ENCODE measurements at regions of chr15 and their contacts with region 1.

Region 1: DNA sequence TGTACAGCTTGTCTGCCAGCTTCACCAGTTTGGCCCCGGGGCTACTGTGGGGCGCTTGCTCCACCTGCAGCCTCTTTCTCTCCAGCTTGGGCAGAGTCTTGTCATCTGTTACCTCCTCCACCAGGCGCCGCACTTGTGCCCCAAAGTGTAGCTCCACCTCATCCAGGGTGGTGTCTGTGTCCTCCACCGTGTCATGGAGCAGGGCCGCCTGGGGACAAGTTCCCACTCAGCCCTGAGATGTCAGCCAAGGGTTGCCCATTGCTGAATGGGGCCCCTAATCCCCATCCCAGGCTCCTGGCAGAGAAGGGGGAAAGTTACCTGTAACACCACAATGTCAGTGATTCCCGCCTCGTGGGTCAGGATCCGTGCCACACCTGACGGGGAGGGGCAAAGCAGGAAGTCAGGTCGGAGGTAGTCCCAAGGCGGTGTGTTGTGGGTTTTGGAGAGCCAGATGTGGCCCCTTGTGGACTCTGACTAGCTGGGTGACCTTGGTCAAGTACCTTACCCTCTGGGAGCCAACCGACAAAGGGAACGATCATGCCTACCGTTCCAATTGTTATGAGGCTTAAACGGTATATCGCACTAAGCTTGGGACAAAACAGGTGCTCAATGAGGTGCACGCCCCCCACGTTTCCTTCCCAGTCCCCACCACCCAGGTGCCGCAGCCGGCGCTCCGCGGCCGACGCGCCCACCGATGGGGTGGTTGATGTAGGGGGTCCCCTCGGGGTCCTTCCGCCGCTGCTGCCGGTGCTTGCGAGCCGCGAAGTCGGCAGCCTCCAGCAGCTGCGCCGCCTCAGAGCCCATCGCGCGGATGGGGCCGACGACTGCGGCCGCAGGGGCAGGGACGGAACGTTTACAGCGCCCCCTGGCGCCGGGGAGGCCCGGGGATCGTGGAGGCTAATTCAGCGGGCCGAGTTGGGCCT is at the start of gene HDDC3:
- DNase-seq: peak; percentile 91 to 93
- ATAC-seq: peak; percentile 46 to 70 (median 55)
- H3K4me3 ChIP-seq: peak within 1 kb of the TSS; percentile 77
- H3K4me3 Mint-ChIP-seq: peak within 1 kb of the TSS; percentile 94
- H3K27ac ChIP-seq: peak within 1 kb of the TSS; percentile 88
- H3K27ac Mint-ChIP-seq: peak within 1 kb of the TSS; percentile 97
- H3K4me1 ChIP-seq: peaks cover 55% of the 10 kb centered on the region
- H3K4me1 Mint-ChIP-seq: peaks cover 53 to 62% of the 10 kb centered on the region in 2 donors
- H3K27me3 ChIP-seq: no peaks in the 10 kb centered on the region
- H3K27me3 Mint-ChIP-seq: no peaks in the 10 kb centered on the region
- CTCF ChIP-seq: peak; percentile 98
- total RNA-seq, gene HDDC3: 11.2 to 14.5 (median 12.1) TPM

Region 2: DNA sequence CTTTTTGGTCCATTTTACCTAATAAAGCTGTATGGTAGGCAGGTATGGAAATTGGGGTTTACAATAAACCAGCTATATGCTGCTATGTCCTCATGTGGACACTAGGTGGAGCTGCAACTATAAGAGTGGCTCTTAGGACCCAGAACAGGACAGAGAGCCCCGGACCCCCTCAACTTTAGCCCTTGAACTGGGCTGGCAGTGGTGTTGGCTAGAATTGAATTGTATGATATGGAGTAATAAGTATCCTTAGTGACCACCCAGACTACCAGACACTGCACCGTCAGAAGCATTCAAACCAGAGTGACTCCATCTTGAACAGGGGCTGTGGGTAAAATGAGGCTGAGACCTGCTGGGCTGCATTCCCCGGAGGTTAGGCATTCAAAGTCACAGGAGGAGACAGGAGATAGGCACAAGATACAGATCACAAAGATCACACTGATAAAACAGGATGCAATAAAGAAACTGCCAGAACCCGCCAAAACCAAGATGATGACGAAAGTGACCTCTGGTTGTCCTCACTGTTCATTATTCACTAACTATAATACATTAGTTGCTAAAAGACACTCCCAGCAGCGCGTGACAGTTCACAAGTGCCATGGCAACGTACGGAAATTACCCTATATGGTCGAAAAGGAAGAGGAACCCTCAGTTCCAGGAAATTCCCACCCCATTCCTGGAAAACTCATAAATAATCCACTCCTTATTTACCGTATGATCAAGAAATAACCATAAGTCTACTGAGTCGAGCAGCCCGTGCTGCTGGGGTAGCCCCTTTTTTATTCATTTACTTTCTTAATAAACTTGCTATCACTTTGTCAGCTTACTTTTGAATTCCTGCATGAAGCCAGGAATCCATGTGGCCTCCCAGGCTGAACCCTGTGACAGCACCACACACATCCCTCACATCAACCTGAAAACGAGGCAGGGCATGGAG is 283.6 kb before region 1 on chr15:
- intact Hi-C with region 1: loop called (anchors 2 kb)
- DNase-seq: peak; percentile 42 to 85
- ATAC-seq: peak; percentile 84 to 88 (median 88)
- H3K4me3 ChIP-seq: no peak overlapping the region
- H3K4me3 Mint-ChIP-seq: peak overlapping the region; percentile 84
- H3K27ac ChIP-seq: peak overlapping the region; percentile 27
- H3K27ac Mint-ChIP-seq: peak overlapping the region; percentile 85 to 92
- H3K4me1 ChIP-seq: peaks cover 12% of the 10 kb centered on the region
- H3K4me1 Mint-ChIP-seq: peaks cover 9 to 24% of the 10 kb centered on the region in 2 donors
- H3K27me3 ChIP-seq: no peaks in the 10 kb centered on the region
- H3K27me3 Mint-ChIP-seq: peaks cover 0 to 7% of the 10 kb centered on the region in 2 donors
- CTCF ChIP-seq: peak; percentile 95

Region 3: DNA sequence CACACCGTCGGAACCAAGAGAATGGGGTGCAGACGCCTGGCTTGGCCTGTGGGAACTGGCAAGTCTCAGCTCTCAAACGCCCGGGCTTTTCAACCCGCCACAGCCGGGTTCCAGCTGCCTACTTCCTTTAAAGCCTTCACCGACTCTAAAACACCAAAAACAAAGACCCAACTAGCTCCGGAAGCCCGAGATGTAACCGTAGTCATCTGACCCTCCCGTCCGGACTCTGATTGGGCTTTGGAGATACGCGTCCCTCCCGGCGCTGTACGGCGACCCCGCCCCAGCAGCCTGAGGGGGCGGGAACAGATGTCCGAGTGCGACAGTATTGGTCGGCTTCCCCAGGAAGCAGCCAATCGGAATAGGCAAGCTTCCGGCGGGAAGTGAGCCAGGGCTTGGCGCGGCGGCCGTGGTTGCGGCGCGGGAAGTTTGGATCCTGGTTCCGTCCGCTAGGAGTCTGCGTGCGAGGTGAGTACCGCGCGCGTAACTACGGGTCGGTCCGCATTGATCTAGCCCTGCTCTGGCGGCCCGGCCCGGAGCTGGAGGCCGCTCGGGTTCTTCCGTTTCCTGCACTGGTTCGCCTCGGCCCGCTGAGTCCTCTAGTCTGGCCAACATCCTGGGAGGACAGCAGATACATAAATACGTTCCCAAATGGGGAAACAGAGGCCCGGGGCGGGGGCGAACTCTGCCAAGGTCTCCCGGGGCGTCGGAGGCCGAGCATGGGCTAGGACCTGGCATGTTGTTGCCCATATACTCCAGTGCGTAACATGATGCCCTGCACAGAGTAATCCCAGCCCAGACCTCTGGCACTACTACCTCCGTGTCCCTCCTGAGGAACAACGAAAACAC is 214.8 kb before region 1 on chr15 and contains the start of gene BLM:
- intact Hi-C with region 1: loop called (anchors 2 kb)
- DNase-seq: peak; percentile 91 to 98
- ATAC-seq: peak; percentile 98 to 100 (median 99)
- H3K4me3 ChIP-seq: peak within 1 kb of the TSS; percentile 92
- H3K4me3 Mint-ChIP-seq: peak within 1 kb of the TSS; percentile 98
- H3K27ac ChIP-seq: peak within 1 kb of the TSS; percentile 82
- H3K27ac Mint-ChIP-seq: peak within 1 kb of the TSS; percentile 95 to 97
- H3K4me1 ChIP-seq: peaks cover 5% of the 10 kb centered on the region
- H3K4me1 Mint-ChIP-seq: peaks cover 37 to 39% of the 10 kb centered on the region in 2 donors
- H3K27me3 ChIP-seq: no peaks in the 10 kb centered on the region
- H3K27me3 Mint-ChIP-seq: no peaks in the 10 kb centered on the region
- CTCF ChIP-seq: no peak
- total RNA-seq, gene BLM: 9.9 to 15.9 (median 14.1) TPM

Region 4: GRCh38 chr15:90851114-90851513 is 80.9 kb before region 1 on chr15:
- intact Hi-C with region 1: no loop called
- DNase-seq: peak in 1 of 2 donors; percentile 68
- ATAC-seq: peak; percentile 24 to 51 (median 42)
- H3K4me3 ChIP-seq: no peak overlapping the region
- H3K4me3 Mint-ChIP-seq: peak overlapping the region; percentile 76
- H3K27ac ChIP-seq: no peak overlapping the region
- H3K27ac Mint-ChIP-seq: peak overlapping the region; percentile 80 to 85
- H3K4me1 ChIP-seq: peaks cover 57% of the 10 kb centered on the region
- H3K4me1 Mint-ChIP-seq: peaks cover 35 to 46% of the 10 kb centered on the region in 2 donors
- H3K27me3 ChIP-seq: no peaks in the 10 kb centered on the region
- H3K27me3 Mint-ChIP-seq: peaks cover 0 to 2% of the 10 kb centered on the region in 2 donors
- CTCF ChIP-seq: no peak

Region 5: GRCh38 chr15:90902040-90902839 is 29.8 kb before region 1 on chr15:
- intact Hi-C with region 1: loop called (anchors 1 kb)
- DNase-seq: peak; percentile 62 to 87
- ATAC-seq: peak; percentile 72 to 85 (median 81)
- H3K4me3 ChIP-seq: peak overlapping the region; percentile 75
- H3K4me3 Mint-ChIP-seq: peak overlapping the region; percentile 93
- H3K27ac ChIP-seq: peak overlapping the region; percentile 74
- H3K27ac Mint-ChIP-seq: peak overlapping the region; percentile 87 to 88
- H3K4me1 ChIP-seq: peaks cover 17% of the 10 kb centered on the region
- H3K4me1 Mint-ChIP-seq: peaks cover 22 to 28% of the 10 kb centered on the region in 2 donors
- H3K27me3 ChIP-seq: no peaks in the 10 kb centered on the region
- H3K27me3 Mint-ChIP-seq: no peaks in the 10 kb centered on the region
- CTCF ChIP-seq: peak; percentile 71

Region 6: DNA sequence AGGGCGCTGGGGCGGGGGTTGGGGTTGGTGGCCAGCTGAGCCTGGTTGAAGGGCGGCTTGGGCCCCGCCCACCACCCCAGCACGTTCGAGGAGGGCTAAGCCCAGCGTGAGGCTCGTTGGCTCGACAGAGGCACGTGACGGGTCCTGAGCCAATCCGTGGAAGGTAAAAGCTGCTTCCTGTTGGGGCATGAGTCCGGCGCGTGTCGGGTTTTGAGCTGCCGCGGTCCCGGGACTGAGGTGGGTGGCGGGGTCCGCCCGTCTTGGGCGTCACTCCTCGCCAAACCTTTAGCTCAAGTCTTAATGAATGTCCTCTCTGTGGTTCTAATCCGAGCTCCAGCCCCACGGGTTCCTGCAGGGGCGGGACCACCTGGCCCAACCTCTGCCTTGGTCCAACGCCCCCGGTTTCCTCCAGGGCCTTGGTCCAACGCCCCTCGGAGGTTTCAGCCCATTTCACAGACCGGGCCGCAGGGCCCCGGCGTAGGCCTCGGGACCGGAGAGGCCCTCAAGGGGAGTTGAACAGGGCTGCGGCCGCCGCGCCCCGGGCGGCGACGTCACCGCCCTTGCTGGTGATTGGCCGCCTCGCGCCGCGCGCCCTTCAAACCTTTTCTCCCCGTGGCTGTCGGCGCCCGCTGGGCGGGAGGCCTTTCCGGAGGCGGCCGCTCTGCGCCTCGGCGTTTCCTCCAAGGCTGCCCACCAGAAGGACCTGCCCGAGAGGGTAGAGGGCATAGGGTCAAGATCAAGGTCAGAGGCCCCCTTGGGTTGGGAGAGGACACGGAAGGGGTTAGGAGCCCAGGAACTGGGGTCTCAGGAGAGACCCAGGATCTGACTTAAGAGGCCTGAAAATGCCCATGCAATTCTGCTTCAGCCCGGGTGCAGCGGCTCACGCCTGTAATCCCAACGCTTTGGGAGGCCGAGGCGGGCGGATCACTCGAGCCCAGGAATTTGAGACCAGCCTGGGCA is 23.0 kb after region 1 on chr15 and contains the start of gene RCCD1:
- intact Hi-C with region 1: loop called (anchors 2 kb)
- DNase-seq: peak; percentile 82 to 93
- ATAC-seq: peak; percentile 95 to 97 (median 97)
- H3K4me3 ChIP-seq: peak within 1 kb of the TSS; percentile 71
- H3K4me3 Mint-ChIP-seq: peak within 1 kb of the TSS; percentile 85
- H3K27ac ChIP-seq: peak within 1 kb of the TSS; percentile 88
- H3K27ac Mint-ChIP-seq: peak within 1 kb of the TSS; percentile 82 to 91
- H3K4me1 ChIP-seq: peaks cover 20% of the 10 kb centered on the region
- H3K4me1 Mint-ChIP-seq: peaks cover 0 to 10% of the 10 kb centered on the region in 2 donors
- H3K27me3 ChIP-seq: no peaks in the 10 kb centered on the region
- H3K27me3 Mint-ChIP-seq: no peaks in the 10 kb centered on the region
- CTCF ChIP-seq: no peak
- total RNA-seq, gene RCCD1: 4.2 to 5.4 (median 5.1) TPM

Measured in natural killer cell (primary cell).